MCF 10A (cell line): ENCODE measurements at regions of chr9 and their contacts with region 1.

Region 1: DNA sequence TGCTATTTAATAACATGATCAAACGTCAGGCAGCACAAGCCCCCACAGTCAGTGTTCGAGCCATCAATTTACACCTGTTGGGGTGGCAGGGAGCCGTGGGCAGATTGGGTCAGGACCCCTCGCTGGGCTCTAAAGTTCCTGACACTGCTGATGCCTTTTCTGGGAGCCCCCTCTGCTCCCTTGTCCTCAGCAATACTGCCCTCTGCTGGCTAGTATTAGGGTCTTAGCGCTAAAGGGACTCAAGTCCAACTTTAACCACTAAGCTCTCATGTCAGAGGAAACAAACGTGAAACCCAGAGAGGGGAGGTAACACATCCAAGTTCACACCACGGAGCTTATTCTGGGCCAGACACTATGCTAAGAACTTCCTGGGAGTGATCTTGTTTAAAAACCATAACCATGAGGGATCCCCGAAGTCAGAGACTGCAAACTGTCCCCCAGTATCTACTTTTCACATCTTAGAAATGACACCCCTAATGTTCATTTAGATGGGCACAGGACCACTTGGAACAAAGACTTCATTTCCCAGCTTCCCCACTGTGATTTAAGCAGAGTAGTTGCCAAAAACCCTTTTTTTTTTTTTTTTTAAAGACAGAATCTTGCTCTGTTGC is 20.4 kb downstream of the ANKS6 start:
- DNase-seq: peak; percentile 70
- H3K4me3 Mint-ChIP-seq: no peak overlapping the region
- H3K27ac Mint-ChIP-seq: no peak overlapping the region
- H3K4me1 Mint-ChIP-seq: no peaks in the 10 kb centered on the region
- H3K27me3 Mint-ChIP-seq: no peaks in the 10 kb centered on the region
- CTCF ChIP-seq: peak; percentile 69

Region 2: DNA sequence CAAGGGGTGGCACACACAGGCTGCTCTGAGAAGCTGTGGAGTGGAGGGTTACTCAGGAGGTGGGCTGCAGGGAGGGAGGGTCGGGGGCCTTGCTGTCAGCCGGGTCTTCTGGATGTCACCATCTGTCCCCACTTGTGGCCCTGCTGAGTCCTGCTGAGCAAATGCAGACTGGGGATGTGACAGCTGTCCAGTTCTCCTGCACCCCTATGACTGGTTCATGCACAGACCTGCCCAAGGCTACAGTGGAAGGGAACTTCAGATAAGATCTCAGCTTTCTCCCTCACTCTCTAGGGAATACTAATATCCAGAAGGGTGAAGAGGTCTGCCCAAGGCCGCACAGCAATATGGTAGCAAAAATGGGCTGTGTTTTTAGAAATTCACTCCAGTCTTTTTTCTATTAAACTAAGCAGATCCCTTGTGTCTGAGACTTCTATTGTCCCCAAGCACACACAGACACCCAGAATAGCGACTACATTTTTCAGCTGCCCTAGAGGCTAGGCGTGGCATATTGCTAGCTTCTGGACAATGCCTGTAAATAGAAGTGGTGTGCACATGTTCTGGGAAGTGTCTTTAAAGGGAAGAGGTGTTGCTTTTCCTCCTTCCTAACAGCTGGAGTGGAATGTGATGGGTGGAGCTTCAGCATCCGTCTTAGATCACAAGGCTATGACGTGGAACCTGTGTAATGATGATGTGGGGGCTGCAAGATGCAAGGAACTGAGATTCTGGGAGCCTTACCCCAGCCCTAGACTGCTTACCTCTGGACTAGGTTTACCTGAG is 469.4 kb before region 1 on chr9:
- CTCF ChIA-PET with region 1: interaction called, 11 read pairs
- POLR2A ChIA-PET with region 1: no interaction called
- intact Hi-C with region 1: no loop called
- DNase-seq: no peak
- H3K4me3 Mint-ChIP-seq: no peak overlapping the region
- H3K27ac Mint-ChIP-seq: no peak overlapping the region
- H3K4me1 Mint-ChIP-seq: peaks cover 13% of the 10 kb centered on the region
- H3K27me3 Mint-ChIP-seq: no peaks in the 10 kb centered on the region
- CTCF ChIP-seq: no peak

Region 3: GRCh38 chr9:98326459-98327248 is 449.3 kb before region 1 on chr9:
- CTCF ChIA-PET with region 1: interaction called, 10 read pairs
- POLR2A ChIA-PET with region 1: no interaction called
- intact Hi-C with region 1: no loop called
- DNase-seq: peak; percentile 47
- H3K4me3 Mint-ChIP-seq: no peak overlapping the region
- H3K27ac Mint-ChIP-seq: no peak overlapping the region
- H3K4me1 Mint-ChIP-seq: peaks cover 25% of the 10 kb centered on the region
- H3K27me3 Mint-ChIP-seq: no peaks in the 10 kb centered on the region
- CTCF ChIP-seq: no peak

Region 4: GRCh38 chr9:98750364-98751060 is 25.4 kb before region 1 on chr9:
- CTCF ChIA-PET with region 1: interaction called, 12 read pairs
- POLR2A ChIA-PET with region 1: no interaction called
- intact Hi-C with region 1: no loop called
- DNase-seq: no peak
- H3K4me3 Mint-ChIP-seq: no peak overlapping the region
- H3K27ac Mint-ChIP-seq: no peak overlapping the region
- H3K4me1 Mint-ChIP-seq: no peaks in the 10 kb centered on the region
- H3K27me3 Mint-ChIP-seq: no peaks in the 10 kb centered on the region
- CTCF ChIP-seq: no peak

Region 5: DNA sequence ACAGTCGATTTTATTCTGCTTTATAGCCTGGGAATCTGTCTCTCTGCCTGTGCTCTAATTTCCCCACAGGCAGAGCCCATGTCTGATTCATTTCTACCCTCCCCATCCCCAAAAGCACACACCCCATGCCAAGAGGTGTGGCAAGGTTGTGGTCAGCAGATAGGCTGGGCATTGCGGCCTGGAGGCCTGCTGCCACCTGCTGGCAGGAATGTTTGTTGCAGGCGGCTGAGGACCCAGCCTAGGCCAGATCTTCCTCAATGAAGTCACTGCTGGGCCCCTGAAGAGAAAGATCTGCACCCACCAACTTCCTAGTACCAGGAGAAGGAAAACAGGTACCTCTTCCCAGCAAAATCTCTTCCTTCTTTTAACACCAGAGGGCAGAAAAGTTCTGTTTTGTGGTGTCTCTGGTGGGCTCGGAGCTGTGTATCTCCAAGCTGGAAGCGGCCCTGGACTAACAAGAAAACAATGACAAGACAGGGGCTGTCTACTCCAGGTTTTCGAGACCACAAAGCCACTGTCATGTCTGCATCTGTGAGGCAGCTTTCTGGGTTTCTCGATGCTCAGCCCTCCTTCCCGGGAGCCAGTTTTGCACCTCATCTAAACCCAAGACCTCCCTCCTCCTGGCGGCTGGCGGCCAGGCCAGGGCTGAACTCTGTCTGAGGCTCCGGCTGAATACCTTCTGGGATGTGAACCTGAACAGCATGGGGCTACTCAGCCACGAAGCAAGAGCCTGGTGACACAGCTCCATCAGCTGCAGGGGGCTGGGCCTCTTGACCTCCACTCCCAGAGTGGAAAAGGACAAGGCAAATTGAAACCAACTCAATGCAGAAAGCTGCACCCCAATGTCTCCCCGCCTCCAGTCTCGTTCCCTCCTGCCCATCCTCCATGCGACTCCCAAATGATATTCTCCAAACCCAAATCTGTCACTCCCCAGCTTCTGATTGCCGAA is 15.5 kb after region 1 on chr9:
- CTCF ChIA-PET with region 1: interaction called, 39 read pairs
- POLR2A ChIA-PET with region 1: interaction called, 3 read pairs
- intact Hi-C with region 1: no loop called
- DNase-seq: peak; percentile 98
- H3K4me3 Mint-ChIP-seq: peak overlapping the region; percentile 50
- H3K27ac Mint-ChIP-seq: no peak overlapping the region
- H3K4me1 Mint-ChIP-seq: peaks cover 35% of the 10 kb centered on the region
- H3K27me3 Mint-ChIP-seq: no peaks in the 10 kb centered on the region
- CTCF ChIP-seq: peak; percentile 97

Region 6: GRCh38 chr9:98881836-98882568 is 106.1 kb after region 1 on chr9:
- CTCF ChIA-PET with region 1: no interaction called
- POLR2A ChIA-PET with region 1: no interaction called
- intact Hi-C with region 1: no loop called
- DNase-seq: no peak
- H3K4me3 Mint-ChIP-seq: no peak overlapping the region
- H3K27ac Mint-ChIP-seq: no peak overlapping the region
- H3K4me1 Mint-ChIP-seq: no peaks in the 10 kb centered on the region
- H3K27me3 Mint-ChIP-seq: peaks cover 82% of the 10 kb centered on the region
- CTCF ChIP-seq: no peak